ENCODE measurements at regions of chr13 and their contacts with region 1.

Region 1: GRCh38 chr13:114065141-114065925 is 67.1 kb downstream of the RASA3 start:
- DNase-seq: peak; percentile 58
- H3K4me3 Mint-ChIP-seq: peak overlapping the region; percentile 72
- H3K27ac Mint-ChIP-seq: peak overlapping the region; percentile 91
- H3K4me1 Mint-ChIP-seq: peaks cover 51% of the 10 kb centered on the region
- H3K27me3 Mint-ChIP-seq: no peaks in the 10 kb centered on the region

Region 2: DNA sequence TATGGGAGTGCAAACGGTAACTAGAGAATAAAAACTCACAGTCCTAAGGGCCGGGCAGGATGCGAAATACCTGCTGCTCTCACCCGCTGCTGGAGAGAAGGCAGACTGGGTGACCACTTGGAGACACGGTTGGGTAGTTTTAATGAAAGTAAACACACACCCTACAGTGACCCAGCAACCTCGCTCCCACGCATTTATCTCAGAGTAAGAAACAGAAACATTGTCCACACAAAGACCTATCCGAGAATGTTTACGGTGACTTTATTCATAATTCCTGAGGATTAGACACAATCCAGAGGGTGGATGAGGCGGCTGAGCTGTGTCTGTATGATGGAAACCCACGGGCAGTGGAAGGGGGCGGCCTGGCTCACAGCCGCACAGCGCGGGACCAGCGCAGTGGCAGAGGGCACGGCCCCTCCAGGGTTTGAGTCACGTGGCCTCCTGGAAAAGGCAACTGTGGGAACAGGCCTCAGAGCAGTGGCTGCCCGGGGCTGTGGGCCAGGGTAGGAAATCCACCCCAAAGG is 17.9 kb before region 1 on chr13:
- intact Hi-C with region 1: loop called (anchors 1 kb)
- DNase-seq: no peak
- H3K4me3 Mint-ChIP-seq: no peak overlapping the region
- H3K27ac Mint-ChIP-seq: no peak overlapping the region
- H3K4me1 Mint-ChIP-seq: peaks cover 51% of the 10 kb centered on the region
- H3K27me3 Mint-ChIP-seq: no peaks in the 10 kb centered on the region

Region 3: GRCh38 chr13:114110091-114110829 is 44.9 kb after region 1 on chr13:
- intact Hi-C with region 1: loop called (anchors 1 kb)
- DNase-seq: peak; percentile 70
- H3K4me3 Mint-ChIP-seq: peak overlapping the region; percentile 83
- H3K27ac Mint-ChIP-seq: peak overlapping the region; percentile 95
- H3K4me1 Mint-ChIP-seq: peaks cover 62% of the 10 kb centered on the region
- H3K27me3 Mint-ChIP-seq: no peaks in the 10 kb centered on the region

Region 4: DNA sequence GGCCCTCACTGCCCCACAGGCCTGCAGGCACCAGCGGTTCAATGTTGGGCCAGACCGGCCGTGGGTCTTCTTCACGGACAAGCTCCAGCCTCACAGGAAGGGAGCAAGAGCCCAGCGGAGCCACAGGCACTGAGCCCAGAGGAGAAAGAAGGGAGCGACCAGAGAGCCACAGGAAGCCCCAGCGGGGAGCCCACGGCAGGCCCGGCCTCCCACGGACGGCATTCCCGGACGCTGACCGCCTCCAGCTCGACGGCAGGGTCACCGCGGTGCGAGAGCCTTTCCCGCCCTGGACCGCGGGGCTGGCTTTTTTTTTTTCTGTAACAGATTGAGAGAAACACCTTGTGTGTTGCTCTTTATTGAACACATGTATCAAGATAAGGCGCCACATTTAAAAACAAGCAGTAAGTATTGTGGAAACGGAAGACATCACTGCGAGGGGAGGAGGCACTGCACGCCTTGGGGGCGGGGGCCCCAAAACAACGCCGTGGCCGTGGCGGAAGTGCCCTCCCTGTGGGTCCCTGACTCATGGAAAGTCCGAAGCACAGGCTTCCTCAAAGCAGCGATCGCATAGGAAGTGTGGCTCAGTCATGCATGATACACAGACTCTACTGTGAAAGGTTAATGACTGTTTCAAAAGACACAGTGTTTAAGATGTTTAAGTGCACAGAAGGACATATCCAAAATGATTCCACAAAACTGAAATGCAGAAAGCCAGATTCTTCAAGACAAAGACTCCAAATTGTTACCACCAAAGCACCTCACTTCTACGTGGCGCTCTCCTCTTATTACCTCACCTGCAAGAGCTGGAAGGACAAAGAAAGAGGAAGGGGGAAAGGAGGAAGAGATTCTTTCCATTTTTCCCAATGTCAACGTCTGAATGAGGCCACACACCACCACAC is 63.5 kb after region 1 on chr13:
- intact Hi-C with region 1: loop called (anchors 1 kb)
- DNase-seq: peak; percentile 84
- H3K4me3 Mint-ChIP-seq: peak overlapping the region; percentile 98
- H3K27ac Mint-ChIP-seq: peak overlapping the region; percentile 88
- H3K4me1 Mint-ChIP-seq: peaks cover 68% of the 10 kb centered on the region
- H3K27me3 Mint-ChIP-seq: peaks cover 2% of the 10 kb centered on the region

Region 5: DNA sequence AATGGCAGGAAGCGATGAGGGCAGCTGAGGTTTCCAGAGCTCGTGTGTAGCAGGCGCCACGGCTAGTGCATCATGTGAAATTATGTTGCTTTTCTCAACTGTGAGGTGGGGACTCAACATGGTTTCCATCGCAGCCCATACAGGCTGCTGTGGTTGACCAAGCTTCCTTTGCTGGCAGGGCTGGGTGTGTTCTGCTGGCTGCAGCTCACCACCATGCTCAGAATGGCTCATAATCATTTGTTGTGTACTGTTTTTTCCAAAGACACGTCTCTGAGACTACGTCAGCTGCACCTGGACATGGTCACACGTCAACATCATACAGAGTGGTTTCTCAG is 83.2 kb after region 1 on chr13:
- intact Hi-C with region 1: loop called (anchors 1 kb)
- DNase-seq: peak; percentile 90
- H3K4me3 Mint-ChIP-seq: peak overlapping the region; percentile 69
- H3K27ac Mint-ChIP-seq: peak overlapping the region; percentile 85
- H3K4me1 Mint-ChIP-seq: peaks cover 84% of the 10 kb centered on the region
- H3K27me3 Mint-ChIP-seq: peaks cover 2% of the 10 kb centered on the region

Region 6: DNA sequence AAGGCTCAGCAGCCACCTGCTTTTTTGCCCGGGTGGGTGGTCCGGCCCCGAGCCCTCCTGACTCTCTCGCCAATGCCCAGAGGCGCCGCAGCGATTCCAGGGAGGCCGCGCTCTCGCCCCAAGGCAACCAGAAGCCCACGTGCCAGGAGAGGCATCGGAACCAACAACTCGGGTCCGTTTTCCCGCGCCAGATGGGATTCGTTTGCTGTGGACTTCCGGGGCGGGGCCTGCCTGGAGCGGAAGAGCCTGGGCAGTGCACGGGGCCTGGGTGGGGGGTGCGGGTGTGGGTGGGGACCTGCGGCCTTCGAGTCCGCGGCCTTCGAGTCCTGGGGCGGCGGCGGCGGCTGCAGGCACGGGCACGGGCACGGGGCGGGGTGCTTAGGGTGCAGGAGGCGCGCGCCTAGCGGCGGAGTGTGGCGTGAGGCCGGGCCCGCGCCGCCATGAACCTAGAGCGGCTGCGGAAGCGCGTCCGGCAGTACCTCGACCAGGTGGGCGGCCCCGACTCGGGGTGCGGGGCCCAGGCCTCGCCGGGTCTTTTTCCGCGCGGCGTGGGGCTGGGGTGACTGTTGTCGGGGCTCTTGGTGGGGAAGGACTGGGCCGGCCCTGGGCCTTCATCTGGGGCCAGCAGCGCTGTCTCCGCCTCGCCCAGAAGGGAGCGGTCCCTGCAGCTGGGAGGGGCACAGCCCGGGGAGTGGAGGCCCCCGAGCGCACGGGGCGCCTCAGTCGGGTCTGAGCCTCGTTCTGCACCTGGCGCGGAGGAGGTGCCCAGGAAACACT is 169.5 kb after region 1 on chr13 and contains the start of gene CDC16:
- intact Hi-C with region 1: loop called (anchors 2 kb)
- DNase-seq: peak; percentile 80
- H3K4me3 Mint-ChIP-seq: peak within 1 kb of the TSS; percentile 88
- H3K27ac Mint-ChIP-seq: peak within 1 kb of the TSS; percentile 81
- H3K4me1 Mint-ChIP-seq: peaks cover 22% of the 10 kb centered on the region
- H3K27me3 Mint-ChIP-seq: peaks cover 8% of the 10 kb centered on the region
- total RNA-seq, gene CDC16: 91.4 and 93.2 TPM in 2 replicates

Region 7: GRCh38 chr13:114281351-114282040 is 216.2 kb after region 1 on chr13 and contains the start of gene UPF3A:
- intact Hi-C with region 1: loop called (anchors 1 kb)
- DNase-seq: peak; percentile 83
- H3K4me3 Mint-ChIP-seq: peak within 1 kb of the TSS; percentile 90
- H3K27ac Mint-ChIP-seq: peak within 1 kb of the TSS; percentile 98
- H3K4me1 Mint-ChIP-seq: peaks cover 52% of the 10 kb centered on the region
- H3K27me3 Mint-ChIP-seq: no peaks in the 10 kb centered on the region
- total RNA-seq, gene UPF3A: 45.9 and 48.3 TPM in 2 replicates